Naive thymus-derived CD4-positive, alpha-beta T cell (primary cell): ENCODE measurements at regions of chr16 and their contacts with region 1.

Region 1: GRCh38 chr16:68116256-68116867 is 31.2 kb downstream of the NFATC3 start:
- DNase-seq: peak in 7 of 9 donors; percentile 11 to 38 (median 19)
- ATAC-seq: peak; percentile 73
- H3K4me3 ChIP-seq: no peak overlapping the region
- H3K4me3 Mint-ChIP-seq: peak overlapping the region in 7 of 10 donors; percentile 3 to 60 (median 52)
- H3K27ac ChIP-seq: peak overlapping the region; percentile 11
- H3K27ac Mint-ChIP-seq: peak overlapping the region in 6 of 9 donors; percentile 28 to 77 (median 57)
- H3K4me1 ChIP-seq: peaks cover 36 to 50% of the 10 kb centered on the region in 2 donors
- H3K4me1 Mint-ChIP-seq: peaks cover 48 to 97% (median 82%) of the 10 kb centered on the region in 7 donors
- H3K27me3 ChIP-seq: no peaks in the 10 kb centered on the region
- H3K27me3 Mint-ChIP-seq: no peaks in the 10 kb centered on the region

Region 2: GRCh38 chr16:68074850-68075555 is 41.4 kb before region 1 on chr16:
- CTCF ChIA-PET with region 1: interaction called, 4 read pairs
- POLR2A ChIA-PET with region 1: interaction called, 5 read pairs
- intact Hi-C with region 1: loop called in 1 of 2 experiments (anchors 1 kb)
- DNase-seq: peak in 2 of 9 donors; percentile 27 to 67
- ATAC-seq: peak; percentile 77
- H3K4me3 ChIP-seq: peak overlapping the region; percentile 9
- H3K4me3 Mint-ChIP-seq: peak overlapping the region; percentile 32 to 79 (median 53)
- H3K27ac ChIP-seq: no peak overlapping the region
- H3K27ac Mint-ChIP-seq: peak overlapping the region; percentile 14 to 90 (median 76)
- H3K4me1 ChIP-seq: peaks cover 75 to 88% of the 10 kb centered on the region in 2 donors
- H3K4me1 Mint-ChIP-seq: peaks cover 69 to 89% (median 86%) of the 10 kb centered on the region in 7 donors
- H3K27me3 ChIP-seq: no peaks in the 10 kb centered on the region
- H3K27me3 Mint-ChIP-seq: no peaks in the 10 kb centered on the region

Region 3: DNA sequence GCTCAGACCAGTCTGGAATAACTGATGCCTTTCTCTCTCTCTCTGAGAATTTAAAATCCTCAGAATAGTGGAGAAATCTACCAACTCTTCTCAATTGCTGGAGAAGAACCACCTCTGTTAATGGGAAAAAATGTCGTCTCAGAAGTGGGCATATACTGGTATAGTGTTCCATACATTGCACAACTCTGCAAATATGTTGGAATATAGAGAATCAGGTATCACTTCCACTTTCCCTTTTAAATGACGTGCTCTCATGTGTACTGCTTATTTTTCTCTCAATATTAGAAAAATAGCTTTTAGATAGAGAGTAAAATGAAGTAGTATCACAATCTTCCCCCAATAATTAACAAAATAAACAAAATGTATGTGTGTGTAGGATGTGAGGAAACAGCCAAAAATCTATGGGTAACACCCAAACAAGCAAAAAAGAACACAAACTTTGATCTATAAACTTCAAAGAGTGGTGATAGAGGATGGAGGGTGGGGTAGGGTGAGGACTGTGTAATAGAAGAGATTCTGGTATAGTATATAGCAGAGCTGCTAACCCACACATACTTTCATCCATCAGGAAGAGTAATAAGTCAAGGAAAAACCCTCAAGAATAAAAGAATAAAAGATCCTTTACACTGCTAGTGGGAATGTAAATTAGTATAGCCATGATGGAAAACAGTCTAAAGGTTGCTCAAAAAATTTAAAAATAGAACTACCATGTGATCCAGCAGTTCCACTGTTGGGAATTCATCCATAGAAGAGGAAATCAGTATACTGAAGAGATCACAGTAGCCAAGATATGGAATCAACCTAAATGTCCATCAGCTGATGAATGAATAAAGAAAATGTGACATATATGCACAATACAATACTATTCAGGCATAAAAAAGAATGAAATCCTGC is 15.7 kb after region 1 on chr16:
- CTCF ChIA-PET with region 1: no interaction called
- POLR2A ChIA-PET with region 1: interaction called, 5 read pairs
- intact Hi-C with region 1: loop called in 1 of 2 experiments (anchors 2 kb)
- DNase-seq: peak in 7 of 9 donors; percentile 37 to 69 (median 48)
- ATAC-seq: peak; percentile 91
- H3K4me3 ChIP-seq: no peak overlapping the region
- H3K4me3 Mint-ChIP-seq: peak overlapping the region; percentile 6 to 72 (median 59)
- H3K27ac ChIP-seq: peak overlapping the region; percentile 50
- H3K27ac Mint-ChIP-seq: peak overlapping the region; percentile 45 to 90 (median 82)
- H3K4me1 ChIP-seq: peaks cover 16 to 29% of the 10 kb centered on the region in 2 donors
- H3K4me1 Mint-ChIP-seq: peaks cover 45 to 73% (median 62%) of the 10 kb centered on the region in 7 donors
- H3K27me3 ChIP-seq: no peaks in the 10 kb centered on the region
- H3K27me3 Mint-ChIP-seq: no peaks in the 10 kb centered on the region

Region 4: GRCh38 chr16:68166264-68166663 is 49.9 kb after region 1 on chr16:
- CTCF ChIA-PET with region 1: no interaction called
- POLR2A ChIA-PET with region 1: no interaction called
- intact Hi-C with region 1: no loop called
- DNase-seq: no peak
- ATAC-seq: no peak
- H3K4me3 ChIP-seq: no peak overlapping the region
- H3K4me3 Mint-ChIP-seq: no peak overlapping the region
- H3K27ac ChIP-seq: no peak overlapping the region
- H3K27ac Mint-ChIP-seq: peak overlapping the region in 4 of 9 donors; percentile 22 to 51 (median 34)
- H3K4me1 ChIP-seq: no peaks in the 10 kb centered on the region
- H3K4me1 Mint-ChIP-seq: peaks cover 0 to 6% (median 0%) of the 10 kb centered on the region in 7 donors
- H3K27me3 ChIP-seq: no peaks in the 10 kb centered on the region
- H3K27me3 Mint-ChIP-seq: no peaks in the 10 kb centered on the region

Region 5: DNA sequence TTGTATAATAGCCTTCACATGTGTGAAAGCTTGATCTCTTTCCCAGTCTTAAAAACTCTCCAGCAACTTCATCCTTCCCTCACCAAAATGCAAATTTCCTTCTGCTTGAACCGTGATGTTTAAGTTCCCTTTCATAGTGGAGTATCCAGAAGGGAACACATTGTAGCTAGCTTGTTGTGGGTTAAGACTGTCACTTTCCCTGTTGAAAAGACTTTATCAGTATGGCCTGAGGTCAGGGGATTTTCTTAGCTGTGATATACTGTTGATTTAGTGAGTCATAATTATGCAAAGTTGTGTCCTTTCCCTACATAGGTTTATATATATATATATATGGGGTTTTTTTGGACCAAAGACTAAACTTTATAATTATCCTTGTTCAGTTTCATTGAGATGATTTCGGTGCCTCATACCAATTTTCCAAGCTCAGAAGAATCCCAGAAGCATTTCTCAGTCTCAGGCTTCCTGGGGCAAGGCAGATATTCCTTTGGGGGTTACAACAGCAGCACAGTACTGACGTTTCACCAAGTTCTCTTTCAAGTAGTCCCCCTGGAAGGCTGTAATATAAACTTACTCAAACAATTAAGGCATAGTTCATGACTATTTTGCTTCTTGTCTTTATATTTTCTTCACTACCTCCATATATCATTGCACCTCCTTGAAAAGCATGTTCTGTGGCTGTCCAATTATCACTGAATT is 83.9 kb after region 1 on chr16:
- CTCF ChIA-PET with region 1: no interaction called
- POLR2A ChIA-PET with region 1: no interaction called
- intact Hi-C with region 1: no loop called
- DNase-seq: no peak
- ATAC-seq: no peak
- H3K4me3 ChIP-seq: no peak overlapping the region
- H3K4me3 Mint-ChIP-seq: no peak overlapping the region
- H3K27ac ChIP-seq: no peak overlapping the region
- H3K27ac Mint-ChIP-seq: peak overlapping the region in 8 of 9 donors; percentile 7 to 78 (median 24)
- H3K4me1 ChIP-seq: no peaks in the 10 kb centered on the region
- H3K4me1 Mint-ChIP-seq: peaks cover 4 to 42% (median 20%) of the 10 kb centered on the region in 7 donors
- H3K27me3 ChIP-seq: no peaks in the 10 kb centered on the region
- H3K27me3 Mint-ChIP-seq: no peaks in the 10 kb centered on the region